Posterior cingulate gyrus (tissue), 11 donors: ENCODE measurements at regions of chr4 and their contacts with region 1.

Region 1: GRCh38 chr4:82798168-82799005 is at the start of gene SCD5:
- DNase-seq: peak; percentile 74 to 98 (median 87)

Region 2: DNA sequence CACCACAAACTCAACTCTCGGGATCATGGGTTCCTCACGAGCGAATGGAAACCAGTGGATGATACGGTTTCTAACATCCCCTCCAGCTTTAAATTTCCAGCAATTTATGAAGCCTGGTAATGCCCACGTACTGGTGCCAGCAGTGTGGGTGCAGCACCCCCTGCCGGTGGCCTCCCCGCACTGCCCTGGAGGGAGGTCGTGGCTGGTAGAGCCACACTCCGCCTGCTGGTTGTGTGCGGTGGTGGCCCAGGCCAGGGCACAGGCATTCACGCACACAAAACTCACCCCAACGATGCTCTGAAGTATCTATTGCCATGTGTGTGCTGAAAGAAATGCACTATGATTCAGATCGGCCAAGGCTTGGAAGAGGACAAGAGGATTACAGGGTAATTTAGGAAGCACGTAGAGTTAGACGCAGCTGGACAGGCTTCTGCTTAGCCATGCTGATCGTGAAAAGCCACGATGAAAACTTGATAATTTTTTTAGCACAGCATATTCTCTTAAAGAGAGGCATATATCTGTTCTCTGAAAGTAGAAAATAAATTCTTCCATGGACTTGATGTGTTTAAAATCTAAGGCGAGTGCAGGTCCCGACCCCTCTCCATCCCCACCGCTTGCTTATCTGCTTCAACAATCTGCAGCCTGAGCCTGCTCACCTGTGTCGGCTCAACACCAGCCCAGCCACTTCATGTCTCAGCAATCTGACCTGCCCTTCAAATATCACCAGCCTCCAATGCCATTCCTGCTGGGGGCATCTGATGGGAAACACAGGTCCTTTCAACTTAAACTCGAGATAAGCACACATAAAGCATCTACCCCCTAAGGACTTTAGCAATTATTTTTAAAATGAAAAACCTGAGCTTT is 58.8 kb before region 1 on chr4:
- intact Hi-C with region 1: loop called (anchors 5 kb)
- DNase-seq: peak; percentile 46 to 96 (median 76)

Region 3: GRCh38 chr4:83658806-83659495 is 860.6 kb after region 1 on chr4:
- intact Hi-C with region 1: no loop called
- DNase-seq: no peak